ENCODE measurements at regions of chr3 and their contacts with region 1.

Region 1: DNA sequence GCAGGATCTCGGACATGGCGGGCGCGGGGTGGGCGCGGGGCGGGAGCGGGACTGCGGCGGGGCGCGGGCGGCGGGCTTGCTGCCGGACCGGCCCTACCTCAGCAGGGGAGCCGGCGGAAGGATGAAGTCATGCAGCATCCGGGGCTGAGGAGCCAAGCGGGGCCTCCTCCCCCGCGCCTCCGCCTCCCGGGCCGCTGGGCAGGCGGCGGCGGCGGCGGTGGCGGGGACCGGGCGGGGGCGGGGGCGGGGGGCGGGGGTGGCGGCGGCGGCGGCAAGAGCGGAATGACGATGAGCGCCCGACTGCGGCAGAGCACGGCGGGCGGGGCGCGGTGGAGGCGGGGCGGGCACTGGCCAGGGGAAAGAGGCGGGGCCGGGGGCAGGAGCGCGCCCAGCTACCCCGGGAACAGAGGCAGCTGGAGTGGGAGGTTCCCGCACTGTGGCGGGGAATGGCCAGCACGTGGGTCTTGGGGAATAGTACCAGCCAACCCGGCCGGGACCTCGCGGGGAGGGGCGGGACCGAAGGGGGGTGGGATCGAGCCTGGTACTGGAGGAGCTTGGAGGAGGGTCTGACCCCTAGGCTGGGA is at the start of gene CAMK2N2:
- DNase-seq: peak; percentile 41
- ATAC-seq: peak; percentile 64
- H3K4me3 ChIP-seq: peak within 1 kb of the TSS; percentile 61 to 73 (median 62)
- H3K27ac ChIP-seq: no peak within 1 kb of the TSS
- H3K4me1 ChIP-seq: peaks cover 24% of the 10 kb centered on the region
- H3K27me3 ChIP-seq: peaks cover 3 to 27% of the 10 kb centered on the region in 2 experiments
- CTCF ChIP-seq: no peak
- EP300 ChIP-seq: no peak
- POLR2A ChIP-seq: no peak
- RAD21 ChIP-seq: no peak
- total RNA-seq, gene CAMK2N2: 0.27 TPM in 1 of 2 replicates, not detected in the other

Region 2: DNA sequence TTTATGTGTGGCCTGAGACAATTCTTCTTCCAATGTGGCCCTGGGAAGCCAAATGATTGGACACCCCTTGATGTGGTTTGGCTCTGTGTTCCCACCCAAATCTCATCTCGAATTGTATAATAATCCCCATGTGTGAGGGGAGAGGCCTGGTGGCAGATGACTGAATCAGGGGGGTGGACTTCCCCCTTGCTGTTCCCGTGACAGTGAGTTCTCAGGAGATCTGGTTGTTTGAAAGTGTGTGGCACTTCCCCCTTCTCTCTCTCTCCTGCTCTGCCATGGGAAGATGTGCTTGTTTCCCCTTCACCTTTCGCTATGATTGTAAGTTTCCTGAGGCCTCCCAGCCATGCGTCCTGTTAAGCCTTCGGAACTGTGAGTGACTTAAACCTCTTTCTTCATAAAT is 316.6 kb before region 1 on chr3:
- CTCF ChIA-PET with region 1: no interaction called
- POLR2A ChIA-PET with region 1: no interaction called
- in situ Hi-C with region 1: no loop called
- intact Hi-C with region 1: no loop called
- DNase-seq: no peak
- ATAC-seq: no peak
- H3K4me3 ChIP-seq: no peak overlapping the region
- H3K27ac ChIP-seq: no peak overlapping the region
- H3K4me1 ChIP-seq: no peaks in the 10 kb centered on the region
- H3K27me3 ChIP-seq: no peaks in the 10 kb centered on the region
- CTCF ChIP-seq: no peak
- EP300 ChIP-seq: no peak
- POLR2A ChIP-seq: no peak
- RAD21 ChIP-seq: no peak

Region 3: GRCh38 chr3:184031187-184031792 is 230.1 kb before region 1 on chr3 and contains the start of gene HTR3D:
- CTCF ChIA-PET with region 1: no interaction called
- POLR2A ChIA-PET with region 1: no interaction called
- in situ Hi-C with region 1: no loop called
- intact Hi-C with region 1: no loop called
- DNase-seq: no peak
- ATAC-seq: no peak
- H3K4me3 ChIP-seq: no peak within 1 kb of the TSS
- H3K27ac ChIP-seq: no peak within 1 kb of the TSS
- H3K4me1 ChIP-seq: no peaks in the 10 kb centered on the region
- H3K27me3 ChIP-seq: peaks cover 1 to 18% of the 10 kb centered on the region in 2 experiments; a peak in 2 of 5 replicates
- CTCF ChIP-seq: no peak
- EP300 ChIP-seq: no peak
- POLR2A ChIP-seq: no peak
- RAD21 ChIP-seq: no peak
- total RNA-seq, gene HTR3D: not detected in 2 replicates

Region 4: DNA sequence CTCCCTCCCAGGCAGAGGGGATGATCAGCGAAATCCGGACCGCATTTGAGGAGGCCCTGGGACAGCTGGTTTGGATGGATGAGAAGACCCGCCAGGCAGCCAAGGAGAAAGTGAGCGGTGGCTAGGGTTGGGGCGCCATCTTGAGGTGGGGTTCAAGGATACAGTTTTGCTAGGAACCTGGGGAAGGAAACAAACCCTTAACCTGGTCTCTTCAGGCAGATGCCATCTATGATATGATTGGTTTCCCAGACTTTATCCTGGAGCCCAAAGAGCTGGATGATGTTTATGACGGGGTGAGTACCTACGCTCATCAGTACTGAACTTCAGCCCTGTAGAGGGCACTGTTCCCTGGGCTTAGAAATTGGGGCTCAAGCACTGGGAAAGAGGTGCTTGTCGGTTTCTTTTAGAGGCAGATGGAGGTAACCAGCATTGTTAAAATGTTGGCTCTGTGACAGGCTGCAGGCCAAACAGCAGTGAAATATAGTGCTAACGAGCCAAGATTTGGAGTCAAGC is 28.1 kb after region 1 on chr3:
- CTCF ChIA-PET with region 1: no interaction called
- POLR2A ChIA-PET with region 1: no interaction called
- in situ Hi-C with region 1: no loop called
- intact Hi-C with region 1: loop called (anchors 1 kb)
- DNase-seq: no peak
- ATAC-seq: peak; percentile 34
- H3K4me3 ChIP-seq: no peak overlapping the region
- H3K27ac ChIP-seq: no peak overlapping the region
- H3K4me1 ChIP-seq: peaks cover 44% of the 10 kb centered on the region
- H3K27me3 ChIP-seq: peaks cover 3 to 24% of the 10 kb centered on the region in 2 experiments; a peak in 3 of 5 replicates
- CTCF ChIP-seq: peak; percentile 89
- EP300 ChIP-seq: no peak
- POLR2A ChIP-seq: no peak
- RAD21 ChIP-seq: peak; percentile 74

Region 5: DNA sequence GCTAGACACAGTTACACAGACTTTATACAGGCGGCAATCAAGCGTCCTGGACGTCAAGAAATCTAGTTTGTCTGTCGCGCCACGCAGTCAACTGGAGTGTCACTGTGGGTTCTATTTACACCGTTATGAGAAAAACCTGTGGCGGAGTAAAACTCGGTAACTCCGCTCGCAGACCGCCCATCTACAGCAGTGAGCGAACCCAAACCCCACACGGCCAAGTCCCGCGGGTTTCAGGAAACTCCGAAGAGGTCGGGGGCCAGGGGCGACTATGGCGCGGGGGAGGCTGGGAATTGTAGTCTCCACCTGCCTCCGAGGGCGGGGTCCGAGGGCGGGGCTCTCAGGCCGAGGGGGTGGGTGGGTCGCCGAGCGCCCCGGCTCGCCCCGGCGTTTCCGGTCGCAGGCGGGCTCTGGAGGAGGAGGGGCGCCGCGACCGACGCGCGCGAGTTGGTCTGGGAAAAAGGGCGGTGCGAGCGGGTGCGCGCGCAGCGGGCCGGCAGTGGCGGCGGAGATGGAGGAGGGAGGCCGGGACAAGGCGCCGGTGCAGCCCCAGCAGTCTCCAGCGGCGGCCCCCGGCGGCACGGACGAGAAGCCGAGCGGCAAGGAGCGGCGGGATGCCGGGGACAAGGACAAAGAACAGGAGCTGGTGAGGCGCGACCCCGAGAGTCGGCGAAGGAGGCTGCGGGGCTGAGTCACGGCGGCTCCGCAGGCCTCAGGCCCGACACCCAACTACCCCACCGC is 37.6 kb after region 1 on chr3 and contains the start of gene PSMD2:
- CTCF ChIA-PET with region 1: no interaction called
- POLR2A ChIA-PET with region 1: no interaction called
- in situ Hi-C with region 1: no loop called
- intact Hi-C with region 1: loop called (anchors 2 kb)
- DNase-seq: peak; percentile 91
- ATAC-seq: peak; percentile 97
- H3K4me3 ChIP-seq: peak within 1 kb of the TSS; percentile 96 to 99 (median 98)
- H3K27ac ChIP-seq: peak within 1 kb of the TSS; percentile 66
- H3K4me1 ChIP-seq: peaks cover 47% of the 10 kb centered on the region
- H3K27me3 ChIP-seq: no peaks in the 10 kb centered on the region; a peak in 1 of 5 replicates
- CTCF ChIP-seq: no peak
- EP300 ChIP-seq: no peak
- POLR2A ChIP-seq: peak; percentile 80 to 86
- RAD21 ChIP-seq: 0 out of 2 replicates have a peak, but pooled peaks have one; percentile 10
- total RNA-seq, gene PSMD2: 200 and 312 TPM in 2 replicates

Region 6: DNA sequence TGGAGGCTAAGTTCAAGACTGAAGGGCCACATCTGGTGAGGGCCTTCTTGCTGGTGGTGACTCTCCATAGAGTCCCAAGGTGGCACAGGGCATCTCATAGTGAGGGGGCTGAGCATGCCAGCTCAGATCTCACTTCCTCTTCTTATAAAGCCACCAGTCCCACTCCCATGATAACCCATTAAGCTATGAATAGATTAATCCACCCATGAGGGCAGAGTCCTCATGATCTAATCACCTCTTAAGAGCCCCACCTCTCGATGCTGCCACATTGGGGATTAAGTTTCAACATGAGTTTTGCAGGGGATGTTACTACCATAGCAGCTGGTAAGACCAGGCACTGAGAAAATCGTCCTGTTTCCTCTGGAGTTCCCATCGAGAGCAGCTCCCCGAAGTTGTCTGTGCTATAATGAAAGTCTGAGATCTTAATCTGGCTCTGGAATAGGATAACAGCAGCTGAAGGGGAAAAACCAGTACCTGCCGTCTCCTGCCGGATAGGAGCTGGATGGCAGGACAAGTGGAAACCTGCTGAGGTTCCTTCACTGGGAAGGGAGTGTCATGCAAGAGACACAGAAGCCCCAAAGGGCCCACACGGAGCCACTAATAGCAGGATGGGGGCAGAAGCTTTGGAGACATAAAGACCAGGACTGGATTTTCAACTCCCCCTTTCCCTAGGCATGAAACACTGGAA is 220.8 kb after region 1 on chr3:
- CTCF ChIA-PET with region 1: no interaction called
- POLR2A ChIA-PET with region 1: no interaction called
- in situ Hi-C with region 1: no loop called
- intact Hi-C with region 1: no loop called
- DNase-seq: no peak
- ATAC-seq: no peak
- H3K4me3 ChIP-seq: no peak overlapping the region
- H3K27ac ChIP-seq: no peak overlapping the region
- H3K4me1 ChIP-seq: no peaks in the 10 kb centered on the region
- H3K27me3 ChIP-seq: peaks cover 0 to 14% of the 10 kb centered on the region in 2 experiments; a peak in 4 of 5 replicates
- CTCF ChIP-seq: no peak
- EP300 ChIP-seq: no peak
- POLR2A ChIP-seq: no peak
- RAD21 ChIP-seq: no peak

Region 7: DNA sequence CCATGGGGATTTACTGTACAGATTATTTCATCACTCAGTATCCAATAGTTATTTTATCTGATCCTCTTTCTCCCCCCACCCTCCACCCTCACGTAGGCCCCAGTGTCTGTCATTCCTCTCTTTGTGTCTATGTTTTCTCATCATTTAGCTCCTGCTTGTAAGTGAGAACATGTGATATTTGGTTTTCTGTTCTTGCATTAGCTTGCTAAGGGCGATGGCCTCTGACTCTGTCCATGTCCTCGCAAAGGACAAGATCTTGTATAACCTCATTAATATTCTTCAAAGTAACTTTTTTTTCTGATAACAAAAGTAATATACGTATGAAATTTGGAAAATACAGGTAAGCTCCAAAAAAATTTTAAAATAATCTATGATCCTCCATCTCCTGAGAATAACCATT is 1169.0 kb after region 1 on chr3:
- CTCF ChIA-PET with region 1: no interaction called
- POLR2A ChIA-PET with region 1: no interaction called
- in situ Hi-C with region 1: no loop called
- intact Hi-C with region 1: no loop called
- DNase-seq: no peak
- ATAC-seq: no peak
- H3K4me3 ChIP-seq: no peak overlapping the region
- H3K27ac ChIP-seq: no peak overlapping the region
- H3K4me1 ChIP-seq: no peaks in the 10 kb centered on the region
- H3K27me3 ChIP-seq: no peaks in the 10 kb centered on the region
- CTCF ChIP-seq: no peak
- EP300 ChIP-seq: no peak
- POLR2A ChIP-seq: no peak
- RAD21 ChIP-seq: no peak

Measured in HepG2 (cell line).